AG04450 (cell line): ENCODE measurements at regions of chr2 and their contacts with region 1.

Region 1: GRCh38 chr2:189179570-189179950 is at the start of gene COL5A2:
- DNase-seq: peak; percentile 77
- H3K4me3 ChIP-seq: peak within 1 kb of the TSS; percentile 75
- H3K27ac ChIP-seq: peak within 1 kb of the TSS; percentile 82
- H3K27me3 ChIP-seq: no peaks in the 10 kb centered on the region
- CTCF ChIP-seq: no peak
- polyA plus RNA-seq, gene COL5A2: 269 and 305 TPM in 2 replicates

Region 2: GRCh38 chr2:189168856-189169499 is 10.6 kb before region 1 on chr2:
- CTCF ChIA-PET with region 1: interaction called, 13 read pairs
- POLR2A ChIA-PET with region 1: no interaction called
- DNase-seq: no peak
- H3K4me3 ChIP-seq: no peak overlapping the region
- H3K27ac ChIP-seq: no peak overlapping the region
- H3K27me3 ChIP-seq: no peaks in the 10 kb centered on the region
- CTCF ChIP-seq: no peak

Region 3: GRCh38 chr2:189210250-189211075 is 30.9 kb after region 1 on chr2:
- CTCF ChIA-PET with region 1: interaction called, 7 read pairs
- POLR2A ChIA-PET with region 1: interaction called, 14 read pairs
- DNase-seq: peak; percentile 93
- H3K4me3 ChIP-seq: peak overlapping the region; percentile 34
- H3K27ac ChIP-seq: peak overlapping the region; percentile 81
- H3K27me3 ChIP-seq: no peaks in the 10 kb centered on the region
- CTCF ChIP-seq: no peak

Region 4: DNA sequence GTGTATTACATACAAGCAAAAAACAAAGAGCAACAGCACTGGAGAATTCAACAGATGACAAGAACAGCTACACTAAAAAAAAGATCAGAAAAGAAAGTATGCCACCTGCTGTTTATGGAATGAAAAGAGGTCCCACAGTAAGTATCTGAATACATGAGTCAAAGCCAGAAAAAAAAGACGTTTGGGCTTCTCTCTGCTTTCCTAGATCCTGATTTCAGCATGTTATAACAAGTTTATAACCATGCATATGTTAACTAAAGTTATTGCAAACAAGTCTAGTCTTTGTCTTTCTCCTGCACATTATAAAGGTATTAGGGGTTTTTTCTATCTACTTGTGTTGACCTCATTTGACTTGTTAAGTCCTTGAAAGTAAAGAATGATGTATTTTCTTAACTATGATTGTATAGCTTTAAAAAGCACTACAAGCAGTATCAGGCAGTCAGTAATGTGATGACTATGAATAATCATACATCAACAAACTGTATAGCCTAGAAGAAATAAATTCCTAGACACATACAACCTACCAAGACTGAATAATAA is 108.5 kb after region 1 on chr2:
- CTCF ChIA-PET with region 1: interaction called, 27 read pairs
- POLR2A ChIA-PET with region 1: interaction called, 11 read pairs
- DNase-seq: peak; percentile 65
- H3K4me3 ChIP-seq: no peak overlapping the region
- H3K27ac ChIP-seq: no peak overlapping the region
- H3K27me3 ChIP-seq: no peaks in the 10 kb centered on the region
- CTCF ChIP-seq: peak; percentile 60